ENCODE measurements at regions of chr6 and their contacts with region 1.

Region 1: DNA sequence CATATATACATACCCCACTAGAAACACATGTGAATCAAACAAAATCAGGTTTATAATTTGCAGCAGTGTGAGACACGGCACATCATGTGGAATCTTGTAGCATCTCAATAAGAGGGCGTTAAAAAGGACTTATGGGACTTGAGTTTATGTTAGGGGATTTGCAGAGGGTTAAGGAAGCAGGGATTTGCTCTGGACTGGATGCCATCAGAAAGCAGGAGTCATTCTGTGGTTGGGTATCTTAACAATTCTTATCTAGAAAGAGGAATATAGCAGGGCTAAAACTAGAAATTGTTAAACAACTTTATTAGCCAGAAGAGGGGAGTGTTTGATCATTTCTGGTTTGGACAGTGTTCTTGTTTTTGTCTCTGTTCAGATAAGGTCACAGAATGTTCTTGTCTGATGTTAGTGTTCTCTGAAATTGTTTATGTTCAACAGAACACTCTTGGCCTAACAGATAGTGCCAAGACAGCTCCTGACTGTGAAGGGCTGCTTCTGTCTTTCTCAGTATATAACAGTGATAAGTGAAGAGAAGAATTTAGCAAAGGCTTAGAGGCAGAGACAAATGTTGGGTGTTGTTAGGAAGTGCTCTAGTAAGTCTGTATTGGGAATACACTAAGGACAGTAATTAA is 39.2 kb downstream of the LIN28B start:
- DNase-seq: peak in 1 of 5 donors; percentile 13
- H3K4me3 ChIP-seq: no peak overlapping the region
- H3K27ac ChIP-seq: no peak overlapping the region
- H3K4me1 ChIP-seq: peaks cover 1% of the 10 kb centered on the region
- H3K27me3 ChIP-seq: peaks cover 2% of the 10 kb centered on the region
- CTCF ChIP-seq: peak in 1 of 3 donors; percentile 25
- EP300 ChIP-seq: no peak
- POLR2A ChIP-seq: no peak

Region 2: DNA sequence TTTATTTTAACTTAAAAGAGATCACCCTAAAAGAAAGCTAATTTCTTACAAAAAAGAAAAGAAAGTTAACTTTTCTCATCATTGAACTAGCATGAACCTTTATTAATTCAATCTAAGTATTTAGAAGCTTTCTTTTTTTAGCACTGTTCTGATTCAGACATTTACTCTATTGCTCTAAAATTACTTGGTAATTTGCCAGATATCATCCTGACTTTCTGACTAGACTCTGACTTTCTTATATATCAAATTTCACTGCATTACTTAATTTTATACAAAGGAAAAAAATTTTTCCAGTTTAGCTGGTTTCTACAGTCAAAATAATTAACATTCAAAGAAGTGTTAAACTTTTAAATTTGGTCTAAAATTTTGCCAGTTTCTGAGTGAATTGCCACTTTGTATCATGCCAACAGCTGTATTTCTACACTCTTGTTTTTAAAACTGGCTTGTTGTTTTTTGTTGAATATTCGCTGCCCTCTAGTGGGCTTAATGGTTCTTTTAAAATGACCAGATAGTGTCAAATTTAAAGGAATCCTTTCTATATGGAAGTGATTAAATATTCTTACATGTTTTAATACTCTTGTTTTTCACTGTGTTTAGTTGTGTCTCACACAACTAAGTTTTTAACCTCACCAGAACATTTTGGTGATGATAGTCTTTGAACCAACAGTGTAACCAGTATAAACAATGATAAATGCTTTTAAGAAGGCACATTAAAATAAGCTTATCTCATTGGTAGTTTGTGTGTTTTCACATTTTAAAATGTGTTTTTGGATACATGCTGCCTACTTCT is 81.7 kb after region 1 on chr6:
- intact Hi-C with region 1: loop called in 2 of 4 experiments (anchors 10 kb)
- DNase-seq: no peak
- H3K4me3 ChIP-seq: no peak overlapping the region
- H3K27ac ChIP-seq: no peak overlapping the region
- H3K4me1 ChIP-seq: no peaks in the 10 kb centered on the region
- H3K27me3 ChIP-seq: no peaks in the 10 kb centered on the region
- CTCF ChIP-seq: no peak
- EP300 ChIP-seq: no peak
- POLR2A ChIP-seq: no peak

Region 3: DNA sequence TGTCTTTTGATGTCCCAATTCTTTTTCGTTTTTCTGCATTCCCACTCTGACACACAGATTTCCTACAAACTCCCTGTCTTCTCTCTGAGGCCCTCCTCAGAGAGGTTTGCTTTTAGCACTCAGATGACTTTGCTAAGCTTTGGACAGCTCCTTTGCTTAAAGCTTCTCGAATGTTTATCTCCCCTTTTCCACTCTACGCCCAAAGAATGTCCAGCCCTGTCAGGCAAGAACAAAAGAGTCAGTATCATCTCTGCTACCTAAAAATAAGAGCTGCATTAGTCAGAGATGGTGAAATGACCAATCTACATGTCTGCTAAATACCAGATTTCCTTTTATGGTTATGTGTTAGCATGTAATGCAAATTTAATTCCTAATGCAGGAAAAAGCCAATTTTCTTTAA is 349.9 kb after region 1 on chr6:
- intact Hi-C with region 1: no loop called
- DNase-seq: no peak
- H3K4me3 ChIP-seq: no peak overlapping the region
- H3K27ac ChIP-seq: no peak overlapping the region
- H3K4me1 ChIP-seq: no peaks in the 10 kb centered on the region
- H3K27me3 ChIP-seq: no peaks in the 10 kb centered on the region
- CTCF ChIP-seq: no peak
- EP300 ChIP-seq: no peak
- POLR2A ChIP-seq: no peak